Activated CD4-positive, alpha-beta T cell treated with anti-CD3 and anti-CD28 coated beads, Interleukin-2, amount 10 ng/mL, durations not matched to agents 24 days and 14 days (primary cell): ENCODE measurements at regions of chr9 and their contacts with region 1.

Region 1: GRCh38 chr9:6353851-6354686 is 25.9 kb downstream of the TPD52L3 start:
- DNase-seq: peak; percentile 82
- H3K4me3 Mint-ChIP-seq: no peak overlapping the region
- H3K27ac Mint-ChIP-seq: no peak overlapping the region
- H3K4me1 Mint-ChIP-seq: peaks cover 11% of the 10 kb centered on the region
- H3K27me3 Mint-ChIP-seq: peaks cover 25% of the 10 kb centered on the region

Region 2: GRCh38 chr9:6484210-6484609 is 130.1 kb after region 1 on chr9:
- intact Hi-C with region 1: loop called (anchors 5 kb)
- DNase-seq: no peak
- H3K4me3 Mint-ChIP-seq: no peak overlapping the region
- H3K27ac Mint-ChIP-seq: no peak overlapping the region
- H3K4me1 Mint-ChIP-seq: peaks cover 2% of the 10 kb centered on the region
- H3K27me3 Mint-ChIP-seq: no peaks in the 10 kb centered on the region

Region 3: GRCh38 chr9:6566409-6567139 is 212.5 kb after region 1 on chr9:
- intact Hi-C with region 1: loop called (anchors 1 kb)
- DNase-seq: peak; percentile 81
- H3K4me3 Mint-ChIP-seq: peak overlapping the region; percentile 73
- H3K27ac Mint-ChIP-seq: peak overlapping the region; percentile 83
- H3K4me1 Mint-ChIP-seq: peaks cover 15% of the 10 kb centered on the region
- H3K27me3 Mint-ChIP-seq: peaks cover 6% of the 10 kb centered on the region

Region 4: DNA sequence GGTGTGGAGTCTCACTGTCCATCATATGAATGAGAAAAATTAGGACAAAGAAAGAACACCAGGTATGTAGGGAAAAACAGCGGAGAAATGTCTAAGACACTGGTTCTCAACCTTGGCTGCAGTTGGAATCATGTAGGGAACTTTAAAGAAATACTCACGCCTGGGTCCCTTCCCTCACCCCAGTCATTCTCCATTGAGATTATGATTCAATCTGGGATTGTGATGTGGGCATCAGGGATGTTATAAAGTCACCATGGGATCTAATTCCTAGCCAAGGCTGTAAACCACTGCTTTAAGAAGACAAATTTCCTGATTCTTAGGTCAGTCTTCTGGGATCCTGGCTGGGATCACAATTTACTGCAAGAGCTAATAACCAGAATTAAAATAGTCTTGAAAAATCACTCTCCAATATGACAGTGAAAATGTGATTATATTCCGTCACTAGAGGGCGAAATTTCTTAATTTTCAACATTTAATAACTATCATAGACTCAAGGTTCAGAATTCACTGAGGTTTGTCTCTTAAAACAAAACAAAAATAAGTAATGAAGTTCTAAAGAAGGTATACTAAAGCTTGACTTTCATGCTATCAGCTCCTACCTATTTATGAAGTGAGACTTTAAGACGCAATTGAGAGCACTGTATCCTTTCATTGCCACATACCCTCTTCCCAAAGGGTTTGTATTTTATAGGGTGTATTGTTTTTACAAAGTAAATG is 231.0 kb after region 1 on chr9:
- intact Hi-C with region 1: no loop called
- DNase-seq: no peak
- H3K4me3 Mint-ChIP-seq: no peak overlapping the region
- H3K27ac Mint-ChIP-seq: no peak overlapping the region
- H3K4me1 Mint-ChIP-seq: no peaks in the 10 kb centered on the region
- H3K27me3 Mint-ChIP-seq: peaks cover 2% of the 10 kb centered on the region